ENCODE measurements at regions of chr11 and their contacts with region 1.

Region 1: GRCh38 chr11:109939166-109939810 is 153.9 kb upstream of the ZC3H12C start:
- DNase-seq: peak; percentile 3
- ATAC-seq: peak; percentile 42
- H3K4me3 Mint-ChIP-seq: no peak overlapping the region
- H3K27ac Mint-ChIP-seq: no peak overlapping the region
- H3K4me1 Mint-ChIP-seq: no peaks in the 10 kb centered on the region
- H3K27me3 Mint-ChIP-seq: peaks cover 4% of the 10 kb centered on the region
- CTCF ChIP-seq: no peak

Region 2: DNA sequence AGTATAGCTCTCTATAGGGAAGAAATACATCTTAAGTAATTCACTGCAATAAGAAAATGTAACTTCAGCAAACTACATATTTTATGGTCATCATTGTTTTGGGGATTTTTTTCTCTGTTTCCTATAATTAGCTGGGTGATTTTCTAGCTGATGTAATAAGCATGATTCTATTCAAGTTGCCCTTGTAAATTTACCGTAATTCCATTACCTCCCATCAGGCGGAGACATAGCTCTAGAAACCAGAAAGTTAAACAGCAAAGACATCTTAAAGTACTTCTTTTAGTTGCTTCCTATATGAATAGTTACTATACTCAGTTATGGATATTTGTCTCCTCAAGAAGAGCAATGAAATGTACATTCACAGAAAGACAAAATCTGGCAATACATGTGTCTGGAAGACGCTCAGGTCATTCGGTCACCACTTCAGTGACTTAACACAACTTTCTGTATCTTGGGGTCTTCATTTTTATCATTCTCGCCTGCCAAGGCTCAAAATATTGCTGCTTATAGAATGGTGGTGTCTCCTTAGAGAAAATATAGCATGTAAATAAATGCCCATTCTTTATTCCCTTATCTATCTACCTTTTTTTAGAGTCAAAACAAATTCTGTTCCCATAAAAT is 86.0 kb before region 1 on chr11:
- CTCF ChIA-PET with region 1: interaction called, 5 read pairs
- POLR2A ChIA-PET with region 1: no interaction called
- intact Hi-C with region 1: loop called (anchors 5 kb)
- DNase-seq: peak; percentile 4
- ATAC-seq: peak; percentile 55
- H3K4me3 Mint-ChIP-seq: no peak overlapping the region
- H3K27ac Mint-ChIP-seq: no peak overlapping the region
- H3K4me1 Mint-ChIP-seq: no peaks in the 10 kb centered on the region
- H3K27me3 Mint-ChIP-seq: no peaks in the 10 kb centered on the region
- CTCF ChIP-seq: peak; percentile 47